Mammary epithelial cell (primary cell): ENCODE measurements at regions of chr5 and their contacts with region 1.

Region 1: GRCh38 chr5:142486581-142486980 is 161.8 kb upstream of the SPRY4 start:
- DNase-seq: no peak
- H3K4me3 ChIP-seq: no peak overlapping the region
- H3K27ac ChIP-seq: no peak overlapping the region
- H3K4me1 ChIP-seq: no peaks in the 10 kb centered on the region
- H3K27me3 ChIP-seq: no peaks in the 10 kb centered on the region
- CTCF ChIP-seq: no peak

Region 2: GRCh38 chr5:142472300-142472951 is 14.2 kb before region 1 on chr5:
- CTCF ChIA-PET with region 1: no interaction called
- dilution Hi-C with region 1: no loop called
- in situ Hi-C with region 1: no loop called
- intact Hi-C with region 1: no loop called
- DNase-seq: peak; percentile 85
- H3K4me3 ChIP-seq: no peak overlapping the region
- H3K27ac ChIP-seq: peak overlapping the region; percentile 69
- H3K4me1 ChIP-seq: peaks cover 30% of the 10 kb centered on the region
- H3K27me3 ChIP-seq: no peaks in the 10 kb centered on the region
- CTCF ChIP-seq: no peak

Region 3: GRCh38 chr5:142529626-142530278 is 43.2 kb after region 1 on chr5:
- CTCF ChIA-PET with region 1: no interaction called
- dilution Hi-C with region 1: loop called (anchors 5 kb)
- in situ Hi-C with region 1: no loop called
- intact Hi-C with region 1: no loop called
- DNase-seq: peak; percentile 97
- H3K4me3 ChIP-seq: no peak overlapping the region
- H3K27ac ChIP-seq: peak overlapping the region; percentile 34
- H3K4me1 ChIP-seq: peaks cover 16% of the 10 kb centered on the region
- H3K27me3 ChIP-seq: no peaks in the 10 kb centered on the region
- CTCF ChIP-seq: no peak